ENCODE measurements at regions of chr2 and their contacts with region 1.

Region 1: DNA sequence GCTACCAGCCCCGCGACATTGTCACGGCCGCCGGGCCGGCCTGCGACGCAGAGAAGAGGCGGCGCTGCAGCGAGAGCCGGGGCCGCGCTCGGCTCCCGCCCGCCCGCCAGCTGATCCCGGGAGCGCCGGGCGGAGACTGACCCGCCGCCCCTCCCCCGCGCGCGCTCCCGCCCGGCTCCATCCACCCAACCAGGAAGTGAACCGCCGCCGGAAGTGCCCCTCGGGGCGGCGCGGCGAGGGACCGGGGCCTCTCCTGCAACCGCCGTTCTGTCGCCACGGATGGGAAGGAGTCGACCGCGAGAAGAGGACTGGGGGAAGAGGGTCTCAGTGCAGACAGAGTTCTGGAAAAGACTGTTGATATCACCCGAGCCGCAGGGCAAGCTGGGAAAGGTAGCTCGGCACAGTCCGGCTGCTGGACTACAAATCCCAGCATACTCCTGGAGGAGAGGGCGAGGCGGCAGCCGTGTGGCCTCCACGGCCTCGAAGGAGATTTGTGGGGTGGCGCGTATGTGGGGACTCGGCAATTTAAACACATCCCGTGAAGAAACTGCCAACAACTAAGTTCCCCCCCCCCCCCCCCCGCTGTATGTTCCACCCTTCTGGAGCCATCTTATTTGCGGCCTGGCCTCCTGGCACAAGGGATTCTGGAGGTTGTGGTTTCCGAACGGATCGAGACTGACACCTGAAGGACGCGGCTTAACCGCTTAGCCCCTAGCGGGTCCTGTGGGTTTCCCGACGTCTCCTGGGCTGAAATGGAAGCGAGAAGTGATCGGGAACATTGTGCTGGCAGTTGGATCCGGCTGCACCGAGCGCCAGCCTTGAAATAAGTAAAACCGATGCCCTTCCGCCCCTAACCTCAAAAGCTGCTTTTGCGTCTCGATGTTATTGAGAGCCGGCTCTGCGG is at the start of gene AAK1:
- DNase-seq: peak; percentile 94
- ATAC-seq: peak; percentile 60
- H3K4me3 Mint-ChIP-seq: peak within 1 kb of the TSS; percentile 82
- H3K27ac Mint-ChIP-seq: peak within 1 kb of the TSS; percentile 99
- H3K4me1 Mint-ChIP-seq: peaks cover 50% of the 10 kb centered on the region
- H3K27me3 Mint-ChIP-seq: no peaks in the 10 kb centered on the region
- total RNA-seq, gene AAK1: 95.9 to 104 TPM

Region 2: GRCh38 chr2:68127358-68128242 is 1516.3 kb before region 1 on chr2:
- CTCF ChIA-PET with region 1: no interaction called
- POLR2A ChIA-PET with region 1: no interaction called
- intact Hi-C with region 1: no loop called
- DNase-seq: no peak
- ATAC-seq: no peak
- H3K4me3 Mint-ChIP-seq: no peak overlapping the region
- H3K27ac Mint-ChIP-seq: no peak overlapping the region
- H3K4me1 Mint-ChIP-seq: no peaks in the 10 kb centered on the region
- H3K27me3 Mint-ChIP-seq: no peaks in the 10 kb centered on the region

Region 3: DNA sequence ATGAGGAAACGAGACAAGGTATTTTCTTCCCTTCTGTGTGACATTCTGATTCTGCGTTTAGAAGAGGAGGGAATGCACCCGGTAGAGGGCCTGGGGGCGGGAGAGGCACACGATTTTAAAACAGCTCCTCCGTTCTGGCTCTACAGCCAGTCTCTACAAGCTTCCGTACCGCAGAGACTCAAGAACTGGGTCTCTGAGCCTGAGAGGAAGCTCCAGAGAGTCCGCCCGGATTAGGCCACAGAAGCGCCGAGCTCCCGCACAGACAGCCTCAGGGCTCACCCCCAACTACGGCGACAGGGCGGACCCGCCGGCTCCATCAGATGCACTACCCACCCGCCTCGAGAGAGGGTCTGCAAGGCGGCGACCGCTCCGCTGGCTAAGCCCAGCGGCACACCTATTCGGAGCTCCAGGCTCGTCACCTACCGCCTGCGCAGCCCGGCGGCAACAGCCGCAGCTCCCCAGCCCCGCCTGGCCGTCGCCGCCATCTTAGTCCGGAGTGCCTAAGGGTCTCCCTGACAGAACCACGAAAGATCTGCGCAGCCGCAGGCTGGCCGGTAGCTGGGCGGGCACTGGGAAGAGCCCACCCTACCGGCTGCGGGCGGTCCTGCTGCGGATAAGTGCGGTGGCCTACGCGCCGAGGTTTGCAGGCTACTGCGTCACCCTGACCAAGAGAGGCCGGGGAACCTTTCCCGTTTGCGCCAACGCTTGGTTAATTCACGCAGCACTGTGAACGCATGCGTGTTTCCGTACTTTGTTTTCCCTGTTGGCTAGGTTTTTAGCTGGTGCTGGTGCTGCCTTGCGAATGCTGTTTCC is 206.7 kb before region 1 on chr2 and contains the start of gene NFU1:
- CTCF ChIA-PET with region 1: no interaction called
- POLR2A ChIA-PET with region 1: no interaction called
- intact Hi-C with region 1: loop called in 1 of 2 experiments (anchors 1 kb)
- DNase-seq: peak; percentile 94
- ATAC-seq: peak; percentile 93
- H3K4me3 Mint-ChIP-seq: peak within 1 kb of the TSS; percentile 93
- H3K27ac Mint-ChIP-seq: peak within 1 kb of the TSS; percentile 95
- H3K4me1 Mint-ChIP-seq: peaks cover 25% of the 10 kb centered on the region
- H3K27me3 Mint-ChIP-seq: no peaks in the 10 kb centered on the region
- total RNA-seq, gene NFU1: 30.0 to 34.3 TPM

Region 4: DNA sequence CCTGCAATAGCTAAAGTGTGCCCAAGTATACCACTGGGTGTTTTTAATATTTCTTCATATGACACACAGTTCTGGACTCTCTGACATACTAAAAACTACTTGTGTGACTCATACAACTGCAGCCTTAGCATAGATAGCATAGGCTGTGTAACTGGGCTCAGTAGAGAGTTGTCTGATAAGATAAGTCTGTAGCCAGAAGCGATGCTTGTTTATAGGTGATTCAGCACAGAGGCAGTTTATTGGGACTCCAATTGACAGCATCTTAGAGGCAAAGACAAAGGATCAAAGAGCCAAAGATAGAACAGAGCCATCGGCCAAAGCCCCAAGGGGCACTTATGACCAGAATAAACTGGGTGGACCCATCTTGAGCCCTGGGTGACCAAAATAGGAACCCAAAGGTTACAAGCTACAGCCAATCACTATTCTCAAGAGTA is 42.7 kb before region 1 on chr2:
- CTCF ChIA-PET with region 1: interaction called, 4 read pairs
- POLR2A ChIA-PET with region 1: interaction called, 4 read pairs
- intact Hi-C with region 1: loop called (anchors 1 kb)
- DNase-seq: no peak
- ATAC-seq: peak; percentile 93
- H3K4me3 Mint-ChIP-seq: no peak overlapping the region
- H3K27ac Mint-ChIP-seq: peak overlapping the region; percentile 82
- H3K4me1 Mint-ChIP-seq: peaks cover 93% of the 10 kb centered on the region
- H3K27me3 Mint-ChIP-seq: no peaks in the 10 kb centered on the region

Region 5: GRCh38 chr2:69660637-69661036 is 16.8 kb after region 1 on chr2:
- CTCF ChIA-PET with region 1: interaction called, 12 read pairs
- POLR2A ChIA-PET with region 1: no interaction called
- intact Hi-C with region 1: no loop called
- DNase-seq: no peak
- ATAC-seq: no peak
- H3K4me3 Mint-ChIP-seq: no peak overlapping the region
- H3K27ac Mint-ChIP-seq: no peak overlapping the region
- H3K4me1 Mint-ChIP-seq: peaks cover 18% of the 10 kb centered on the region
- H3K27me3 Mint-ChIP-seq: no peaks in the 10 kb centered on the region

Region 6: GRCh38 chr2:69694894-69695849 is 51.3 kb after region 1 on chr2:
- CTCF ChIA-PET with region 1: interaction called, 5 read pairs
- POLR2A ChIA-PET with region 1: interaction called, 4 read pairs
- intact Hi-C with region 1: loop called (anchors 1 to 2 kb)
- DNase-seq: no peak
- ATAC-seq: peak; percentile 69
- H3K4me3 Mint-ChIP-seq: peak overlapping the region; percentile 7
- H3K27ac Mint-ChIP-seq: peak overlapping the region; percentile 1
- H3K4me1 Mint-ChIP-seq: peaks cover 90% of the 10 kb centered on the region
- H3K27me3 Mint-ChIP-seq: no peaks in the 10 kb centered on the region

Region 7: DNA sequence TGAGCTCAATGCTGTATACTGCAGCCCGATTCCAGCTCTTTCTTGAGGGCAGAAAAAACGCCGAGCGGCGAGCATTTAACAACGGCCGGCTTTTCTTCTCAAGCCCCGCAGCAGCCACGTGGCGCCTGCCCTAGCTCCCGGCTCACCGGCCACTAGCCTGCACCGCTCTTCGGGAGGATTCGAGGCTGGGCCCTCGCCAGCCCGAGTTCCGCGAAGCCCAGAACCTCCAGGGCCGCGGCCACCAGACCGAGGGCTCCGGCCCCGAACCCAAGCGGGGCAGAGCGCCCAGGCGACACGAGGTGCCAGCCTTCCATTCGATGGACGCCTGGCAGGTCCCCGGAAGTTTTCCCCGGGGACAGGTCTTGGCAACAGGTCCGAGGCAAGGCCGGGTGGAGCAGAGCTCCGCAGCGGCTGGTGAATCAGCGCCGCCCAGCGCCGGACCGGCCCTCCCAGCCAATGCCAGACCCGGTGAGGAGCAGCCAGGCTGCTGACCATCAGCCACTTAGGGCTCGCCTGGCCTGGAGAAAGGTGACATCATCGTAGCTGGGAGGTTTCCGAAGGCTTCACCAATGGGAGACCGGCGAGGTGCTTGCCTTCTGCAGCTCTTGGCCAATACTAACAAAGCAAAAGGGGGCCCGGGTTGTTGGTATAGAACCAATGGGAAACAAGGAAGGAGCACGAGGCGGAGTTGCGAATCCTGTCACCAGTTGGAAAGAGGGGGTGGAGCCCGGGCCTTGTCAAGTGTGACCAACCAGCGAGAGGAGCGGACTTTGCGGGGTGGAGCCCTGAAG is 270.5 kb after region 1 on chr2:
- CTCF ChIA-PET with region 1: no interaction called
- POLR2A ChIA-PET with region 1: no interaction called
- intact Hi-C with region 1: loop called in 1 of 2 experiments (anchors 1 kb)
- DNase-seq: peak; percentile 100
- ATAC-seq: peak; percentile 96
- H3K4me3 Mint-ChIP-seq: peak overlapping the region; percentile 81
- H3K27ac Mint-ChIP-seq: peak overlapping the region; percentile 89
- H3K4me1 Mint-ChIP-seq: peaks cover 35% of the 10 kb centered on the region
- H3K27me3 Mint-ChIP-seq: no peaks in the 10 kb centered on the region

Region 8: DNA sequence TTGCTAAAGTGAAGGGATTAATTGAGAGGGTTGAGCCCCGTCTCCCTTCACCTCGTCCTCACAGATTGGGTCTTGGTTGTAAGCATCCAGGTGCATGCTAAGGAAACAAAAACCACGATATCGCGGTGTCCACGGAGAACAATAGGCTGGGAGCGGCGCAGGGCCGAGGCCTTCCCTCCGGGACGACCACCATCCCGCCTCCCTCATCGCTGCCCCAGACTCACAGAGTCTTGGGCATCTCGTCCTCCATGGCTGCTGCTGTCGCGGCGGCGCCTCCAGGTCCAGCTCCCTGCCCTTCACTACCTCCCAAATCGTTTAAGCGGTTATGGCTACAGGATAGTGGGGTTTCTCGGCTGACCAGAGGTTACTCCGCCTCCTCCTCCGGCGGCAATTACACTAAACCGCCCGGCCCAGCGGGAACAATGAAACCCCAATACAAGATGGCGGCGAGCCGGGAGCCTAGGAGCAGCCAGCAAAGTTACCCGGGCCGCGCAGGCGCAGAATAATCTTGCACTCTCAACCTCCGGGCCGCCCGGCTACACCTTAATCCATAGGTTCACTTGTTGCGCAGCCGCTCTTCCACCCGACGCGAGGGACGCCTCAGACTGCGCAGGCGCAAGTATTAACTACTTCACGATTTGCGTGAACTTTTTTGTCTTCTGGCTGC is 604.5 kb after region 1 on chr2 and contains the start of gene TIA1:
- CTCF ChIA-PET with region 1: no interaction called
- POLR2A ChIA-PET with region 1: no interaction called
- intact Hi-C with region 1: loop called in 1 of 2 experiments (anchors 5 kb)
- DNase-seq: peak; percentile 99
- ATAC-seq: peak; percentile 98
- H3K4me3 Mint-ChIP-seq: peak within 1 kb of the TSS; percentile 98
- H3K27ac Mint-ChIP-seq: peak within 1 kb of the TSS; percentile 97
- H3K4me1 Mint-ChIP-seq: peaks cover 30% of the 10 kb centered on the region
- H3K27me3 Mint-ChIP-seq: no peaks in the 10 kb centered on the region
- total RNA-seq, gene TIA1: 85.4 to 98.3 TPM

Measured in activated CD4-positive, alpha-beta T cell treated with anti-CD3 and anti-CD28 coated beads for 36 hours (primary cell).